Calu3 (cell line): ENCODE measurements at regions of chr12 and their contacts with region 1.

Region 1: GRCh38 chr12:4293299-4293965 is 19.9 kb downstream of the CCND2 start:
- DNase-seq: no peak
- H3K4me3 Mint-ChIP-seq: no peak overlapping the region
- H3K27ac Mint-ChIP-seq: no peak overlapping the region
- H3K4me1 Mint-ChIP-seq: no peaks in the 10 kb centered on the region
- H3K27me3 Mint-ChIP-seq: peaks cover 100% of the 10 kb centered on the region
- CTCF ChIP-seq: no peak

Region 2: DNA sequence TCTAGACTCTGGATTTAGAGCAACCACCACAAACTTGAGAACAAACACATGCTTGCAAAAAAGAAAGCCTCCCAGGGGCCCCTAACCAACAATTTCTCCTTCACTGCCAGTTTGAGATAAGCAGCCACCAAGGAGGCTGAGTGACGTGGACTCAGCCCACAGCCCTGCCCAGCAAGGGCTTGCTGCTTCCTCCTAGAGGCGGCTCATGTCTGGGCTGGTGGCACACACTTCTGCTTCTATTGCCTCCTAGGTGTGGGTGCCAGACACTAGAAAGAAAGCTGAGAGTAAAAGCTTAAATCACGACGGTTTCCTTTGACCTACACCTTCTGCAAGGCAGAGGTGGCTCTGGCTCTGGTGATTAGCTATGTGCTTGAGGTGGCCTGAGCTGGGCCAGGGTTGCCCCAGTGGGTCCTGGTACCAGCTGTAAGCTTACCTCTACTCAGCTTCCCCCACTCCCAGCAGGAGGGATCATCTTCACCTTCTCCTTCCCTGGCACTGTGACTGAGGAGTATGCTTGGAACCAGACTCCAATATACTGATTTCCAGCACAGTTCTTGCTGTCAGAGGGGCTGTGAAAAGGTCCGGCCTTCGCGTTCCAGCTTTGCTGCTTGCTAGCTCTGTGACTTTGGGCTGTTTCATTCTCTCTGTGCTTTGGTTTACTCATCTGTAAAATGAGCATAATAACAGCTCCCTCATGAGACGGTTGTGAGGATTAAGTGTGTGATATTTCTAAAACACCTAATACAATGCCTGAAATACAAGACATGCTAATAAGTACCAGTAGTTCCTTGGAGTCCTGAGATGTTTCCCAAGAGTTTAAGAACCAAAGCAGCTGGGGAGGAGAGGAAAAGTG is 330.6 kb before region 1 on chr12:
- CTCF ChIA-PET with region 1: no interaction called
- intact Hi-C with region 1: no loop called
- DNase-seq: no peak
- H3K4me3 Mint-ChIP-seq: no peak overlapping the region
- H3K27ac Mint-ChIP-seq: no peak overlapping the region
- H3K4me1 Mint-ChIP-seq: no peaks in the 10 kb centered on the region
- H3K27me3 Mint-ChIP-seq: peaks cover 75% of the 10 kb centered on the region
- CTCF ChIP-seq: no peak

Region 3: GRCh38 chr12:4392223-4392742 is 98.9 kb after region 1 on chr12:
- CTCF ChIA-PET with region 1: interaction called, 12 read pairs
- intact Hi-C with region 1: no loop called
- DNase-seq: no peak
- H3K4me3 Mint-ChIP-seq: no peak overlapping the region
- H3K27ac Mint-ChIP-seq: no peak overlapping the region
- H3K4me1 Mint-ChIP-seq: no peaks in the 10 kb centered on the region
- H3K27me3 Mint-ChIP-seq: peaks cover 47% of the 10 kb centered on the region
- CTCF ChIP-seq: no peak